ENCODE measurements at regions of chr1 and their contacts with region 1.

Region 1: DNA sequence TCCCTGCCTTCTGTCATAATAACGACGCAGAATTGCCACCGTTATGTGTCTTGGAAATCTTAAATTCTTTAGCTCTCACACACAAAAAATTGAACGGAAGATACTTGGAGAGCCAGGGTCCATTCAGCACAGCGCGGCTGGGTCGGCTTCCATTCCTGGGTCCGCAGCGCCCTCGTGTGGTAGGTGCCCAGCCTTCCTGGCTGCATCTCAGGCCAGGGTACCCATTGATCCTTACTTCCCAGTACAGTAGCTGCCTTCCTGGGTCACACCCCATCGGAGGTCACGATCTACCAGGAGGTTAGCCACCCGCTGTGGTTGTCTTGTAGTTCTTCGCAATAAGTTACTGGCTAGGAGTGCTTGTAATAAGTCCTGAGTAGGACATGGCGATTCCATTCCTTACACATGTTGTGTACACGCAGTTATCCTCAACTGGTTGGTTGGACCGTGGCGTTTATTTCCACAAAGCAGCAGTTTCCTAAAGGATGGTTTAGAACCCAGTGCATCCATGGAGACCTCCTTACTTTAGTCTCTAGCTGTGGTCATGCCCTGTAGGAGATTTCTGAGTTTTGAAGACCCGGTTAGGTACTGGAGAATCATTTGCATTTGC is 9.9 kb upstream of the MTARC1 start:
- DNase-seq: peak; percentile 88
- H3K4me3 Mint-ChIP-seq: no peak overlapping the region
- H3K27ac Mint-ChIP-seq: no peak overlapping the region
- H3K4me1 Mint-ChIP-seq: no peaks in the 10 kb centered on the region
- H3K27me3 Mint-ChIP-seq: no peaks in the 10 kb centered on the region
- CTCF ChIP-seq: peak; percentile 99

Region 2: GRCh38 chr1:220198186-220199005 is 578.4 kb before region 1 on chr1:
- CTCF ChIA-PET with region 1: interaction called, 20 read pairs
- POLR2A ChIA-PET with region 1: no interaction called
- intact Hi-C with region 1: no loop called
- DNase-seq: no peak
- H3K4me3 Mint-ChIP-seq: no peak overlapping the region
- H3K27ac Mint-ChIP-seq: no peak overlapping the region
- H3K4me1 Mint-ChIP-seq: no peaks in the 10 kb centered on the region
- H3K27me3 Mint-ChIP-seq: no peaks in the 10 kb centered on the region
- CTCF ChIP-seq: no peak

Region 3: GRCh38 chr1:220300442-220301121 is 476.2 kb before region 1 on chr1:
- CTCF ChIA-PET with region 1: interaction called, 92 read pairs
- POLR2A ChIA-PET with region 1: no interaction called
- intact Hi-C with region 1: loop called (anchors 1 kb)
- DNase-seq: peak; percentile 91
- H3K4me3 Mint-ChIP-seq: peak overlapping the region; percentile 25
- H3K27ac Mint-ChIP-seq: peak overlapping the region; percentile 85
- H3K4me1 Mint-ChIP-seq: peaks cover 13% of the 10 kb centered on the region
- H3K27me3 Mint-ChIP-seq: no peaks in the 10 kb centered on the region
- CTCF ChIP-seq: no peak

Region 4: DNA sequence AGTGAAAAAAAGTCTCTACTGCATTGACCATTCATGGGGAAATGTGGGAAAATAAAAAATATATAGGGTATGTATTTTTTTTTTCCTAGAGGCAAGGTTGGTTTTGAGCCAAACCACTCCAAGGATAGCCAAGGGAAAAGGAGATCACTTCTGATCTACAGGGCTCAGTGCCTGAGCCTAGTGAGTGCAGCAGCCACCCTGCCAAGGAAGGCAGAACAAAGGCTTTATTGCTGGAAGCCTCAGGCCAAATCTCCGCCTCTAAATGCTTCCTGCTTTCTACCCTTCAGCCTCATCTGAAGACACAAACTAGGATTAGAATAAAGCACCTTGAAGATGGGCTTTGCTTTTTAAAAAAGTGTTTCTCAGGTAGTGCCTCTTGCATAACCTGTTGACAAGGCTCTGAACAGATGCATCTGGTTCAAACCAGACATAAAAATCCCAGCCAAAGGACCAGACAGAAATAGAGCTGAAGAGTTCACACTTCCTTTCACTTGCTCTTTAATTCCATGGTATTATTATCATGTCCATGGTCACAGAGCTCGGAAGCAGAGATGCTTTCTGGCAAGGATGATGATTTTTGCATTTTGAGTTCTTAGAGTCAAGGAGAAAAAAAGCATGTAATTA is 76.2 kb before region 1 on chr1:
- CTCF ChIA-PET with region 1: interaction called, 20 read pairs
- POLR2A ChIA-PET with region 1: no interaction called
- intact Hi-C with region 1: no loop called
- DNase-seq: peak; percentile 28
- H3K4me3 Mint-ChIP-seq: no peak overlapping the region
- H3K27ac Mint-ChIP-seq: no peak overlapping the region
- H3K4me1 Mint-ChIP-seq: no peaks in the 10 kb centered on the region
- H3K27me3 Mint-ChIP-seq: no peaks in the 10 kb centered on the region
- CTCF ChIP-seq: no peak

Region 5: DNA sequence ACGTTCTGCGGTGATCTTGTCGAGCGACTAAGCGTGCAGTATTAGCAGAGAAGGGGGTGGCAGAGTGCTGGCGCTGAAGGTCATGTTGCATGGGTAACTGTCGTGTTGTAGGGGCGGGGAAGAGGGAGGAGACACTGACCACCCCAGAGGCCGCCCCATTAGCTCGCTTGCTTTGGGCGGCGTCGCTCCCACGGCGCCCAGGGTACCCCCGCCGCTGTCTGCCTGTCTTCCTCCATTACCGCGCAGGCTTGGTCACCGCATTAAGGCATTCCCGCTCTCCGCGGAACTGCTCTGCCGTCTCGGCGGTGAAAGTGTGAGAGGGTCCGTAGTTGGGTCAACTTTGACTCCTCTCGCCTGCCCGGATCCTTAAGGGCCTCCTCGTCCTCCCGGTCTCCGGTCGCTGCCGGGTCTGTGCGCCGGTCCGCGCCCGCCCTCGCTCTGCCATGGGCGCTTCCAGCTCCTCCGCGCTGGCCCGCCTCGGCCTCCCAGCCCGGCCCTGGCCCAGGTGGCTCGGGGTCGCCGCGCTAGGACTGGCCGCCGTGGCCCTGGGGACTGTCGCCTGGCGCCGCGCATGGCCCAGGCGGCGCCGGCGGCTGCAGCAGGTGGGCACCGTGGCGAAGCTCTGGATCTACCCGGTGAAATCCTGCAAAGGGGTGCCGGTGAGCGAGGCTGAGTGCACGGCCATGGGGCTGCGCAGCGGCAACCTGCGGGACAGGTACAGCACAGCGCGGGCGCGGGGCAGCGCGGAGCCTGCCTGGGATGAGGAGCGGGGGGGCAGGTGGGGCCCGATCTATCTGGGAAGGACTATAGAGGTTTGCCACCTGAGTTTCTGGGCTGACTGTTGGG is 28.5 kb before region 1 on chr1 and contains the start of gene MTARC2:
- CTCF ChIA-PET with region 1: interaction called, 95 read pairs
- POLR2A ChIA-PET with region 1: interaction called, 4 read pairs
- intact Hi-C with region 1: no loop called
- DNase-seq: peak; percentile 77
- H3K4me3 Mint-ChIP-seq: peak within 1 kb of the TSS; percentile 71
- H3K27ac Mint-ChIP-seq: no peak within 1 kb of the TSS
- H3K4me1 Mint-ChIP-seq: no peaks in the 10 kb centered on the region
- H3K27me3 Mint-ChIP-seq: no peaks in the 10 kb centered on the region
- CTCF ChIP-seq: no peak
- total RNA-seq, gene MTARC2: 3.6 and 5.2 TPM in 2 replicates

Region 6: GRCh38 chr1:220983877-220984635 is 207.2 kb after region 1 on chr1:
- CTCF ChIA-PET with region 1: no interaction called
- POLR2A ChIA-PET with region 1: no interaction called
- intact Hi-C with region 1: no loop called
- DNase-seq: peak; percentile 20
- H3K4me3 Mint-ChIP-seq: no peak overlapping the region
- H3K27ac Mint-ChIP-seq: no peak overlapping the region
- H3K4me1 Mint-ChIP-seq: no peaks in the 10 kb centered on the region
- H3K27me3 Mint-ChIP-seq: no peaks in the 10 kb centered on the region
- CTCF ChIP-seq: peak; percentile 14

Measured in MCF 10A (cell line).